Activated B cell treated with CpG ODN at 0.5 μM for 24 hours (primary cell): ENCODE measurements at regions of chr17 and their contacts with region 1.

Region 1: GRCh38 chr17:82836823-82837357 is 2.9 kb downstream of the ZNF750 start:
- DNase-seq: no peak
- ATAC-seq: no peak
- H3K4me3 Mint-ChIP-seq: no peak overlapping the region
- H3K27ac Mint-ChIP-seq: no peak overlapping the region
- H3K4me1 Mint-ChIP-seq: no peaks in the 10 kb centered on the region
- H3K27me3 Mint-ChIP-seq: no peaks in the 10 kb centered on the region
- CTCF ChIP-seq: no peak

Region 2: GRCh38 chr17:82668631-82669099 is 168.2 kb before region 1 on chr17:
- CTCF ChIA-PET with region 1: no interaction called
- POLR2A ChIA-PET with region 1: no interaction called
- intact Hi-C with region 1: no loop called
- DNase-seq: peak; percentile 33
- ATAC-seq: peak; percentile 98
- H3K4me3 Mint-ChIP-seq: peak overlapping the region; percentile 67
- H3K27ac Mint-ChIP-seq: peak overlapping the region; percentile 30
- H3K4me1 Mint-ChIP-seq: peaks cover 6% of the 10 kb centered on the region
- H3K27me3 Mint-ChIP-seq: peaks cover 2% of the 10 kb centered on the region
- CTCF ChIP-seq: no peak

Region 3: GRCh38 chr17:82823004-82823403 is 13.9 kb before region 1 on chr17:
- CTCF ChIA-PET with region 1: no interaction called
- POLR2A ChIA-PET with region 1: no interaction called
- intact Hi-C with region 1: loop called (anchors 1 kb)
- DNase-seq: no peak
- ATAC-seq: no peak
- H3K4me3 Mint-ChIP-seq: no peak overlapping the region
- H3K27ac Mint-ChIP-seq: no peak overlapping the region
- H3K4me1 Mint-ChIP-seq: peaks cover 22% of the 10 kb centered on the region
- H3K27me3 Mint-ChIP-seq: no peaks in the 10 kb centered on the region
- CTCF ChIP-seq: no peak

Region 4: DNA sequence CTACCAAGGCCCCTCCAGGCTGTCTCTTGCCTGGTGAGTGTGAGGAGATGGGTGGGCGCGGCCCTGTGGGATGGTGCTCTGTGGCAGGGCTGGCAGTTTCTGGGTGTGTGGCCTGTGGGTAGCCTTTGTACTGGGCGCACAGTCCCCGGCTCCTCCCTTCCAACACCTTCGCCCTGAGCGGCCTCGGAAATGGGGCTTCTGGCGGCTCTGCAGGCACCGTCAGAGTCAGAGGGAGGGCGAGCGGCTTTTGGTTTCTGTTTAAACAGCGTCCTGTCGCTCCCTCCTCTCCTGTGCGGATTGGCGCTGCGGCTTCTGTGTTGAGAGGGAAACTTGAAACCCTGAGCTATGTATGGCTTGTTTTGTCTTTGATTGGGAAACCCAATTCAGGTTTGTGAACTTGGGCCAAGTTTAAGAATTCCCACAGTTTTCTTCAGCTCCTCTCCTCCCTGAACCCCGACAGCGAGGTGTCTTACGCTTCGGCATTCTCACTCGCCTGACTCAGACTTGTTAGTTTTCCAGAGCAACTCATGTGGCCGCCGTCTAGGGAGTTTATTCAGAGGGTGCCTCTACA is 11.2 kb after region 1 on chr17:
- CTCF ChIA-PET with region 1: no interaction called
- POLR2A ChIA-PET with region 1: interaction called, 11 read pairs
- intact Hi-C with region 1: no loop called
- DNase-seq: no peak
- ATAC-seq: no peak
- H3K4me3 Mint-ChIP-seq: no peak overlapping the region
- H3K27ac Mint-ChIP-seq: no peak overlapping the region
- H3K4me1 Mint-ChIP-seq: peaks cover 15% of the 10 kb centered on the region
- H3K27me3 Mint-ChIP-seq: no peaks in the 10 kb centered on the region
- CTCF ChIP-seq: no peak